Psoas muscle (tissue), 8 donors: ENCODE measurements at regions of chr5 and their contacts with region 1.

Region 1: DNA sequence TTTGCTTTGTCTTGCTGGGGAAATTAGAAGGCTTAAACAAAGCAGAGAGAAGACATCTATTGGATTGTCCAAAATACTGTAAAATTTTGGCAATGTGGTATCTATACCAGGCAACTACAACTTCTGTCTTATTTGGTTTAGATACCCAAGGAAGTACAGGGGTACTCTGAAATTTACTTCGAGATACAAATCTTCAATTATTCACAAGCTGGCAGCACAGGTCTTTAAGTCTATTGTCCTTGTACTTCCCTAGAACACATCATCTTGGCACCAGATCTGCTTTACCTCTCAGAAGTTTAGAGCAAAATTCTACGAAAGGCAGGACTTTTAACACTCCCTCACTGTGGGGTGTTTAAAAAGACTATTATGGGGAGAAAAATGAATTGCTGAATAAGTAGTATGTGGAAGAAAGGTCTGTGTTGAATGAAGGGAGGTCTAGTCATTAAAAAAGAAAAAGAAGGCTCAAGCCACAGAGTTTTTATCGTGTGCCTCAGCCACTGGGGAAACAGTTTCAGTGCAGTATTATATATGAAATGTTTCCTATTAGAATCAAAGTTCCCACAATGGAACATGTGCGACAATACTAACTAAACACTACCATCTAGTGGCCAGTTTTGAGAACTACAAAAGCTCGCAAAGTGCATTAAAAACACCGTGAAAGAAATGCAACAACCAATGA is 93.7 kb downstream of the PDE4D start:
- DNase-seq: no peak
- ATAC-seq: peak; percentile 66 to 90 (median 78)
- H3K4me3 ChIP-seq: no peak overlapping the region
- H3K27ac ChIP-seq: no peak overlapping the region
- H3K4me1 ChIP-seq: no peaks in the 10 kb centered on the region
- H3K27me3 ChIP-seq: no peaks in the 10 kb centered on the region
- CTCF ChIP-seq: peak; percentile 85

Region 2: DNA sequence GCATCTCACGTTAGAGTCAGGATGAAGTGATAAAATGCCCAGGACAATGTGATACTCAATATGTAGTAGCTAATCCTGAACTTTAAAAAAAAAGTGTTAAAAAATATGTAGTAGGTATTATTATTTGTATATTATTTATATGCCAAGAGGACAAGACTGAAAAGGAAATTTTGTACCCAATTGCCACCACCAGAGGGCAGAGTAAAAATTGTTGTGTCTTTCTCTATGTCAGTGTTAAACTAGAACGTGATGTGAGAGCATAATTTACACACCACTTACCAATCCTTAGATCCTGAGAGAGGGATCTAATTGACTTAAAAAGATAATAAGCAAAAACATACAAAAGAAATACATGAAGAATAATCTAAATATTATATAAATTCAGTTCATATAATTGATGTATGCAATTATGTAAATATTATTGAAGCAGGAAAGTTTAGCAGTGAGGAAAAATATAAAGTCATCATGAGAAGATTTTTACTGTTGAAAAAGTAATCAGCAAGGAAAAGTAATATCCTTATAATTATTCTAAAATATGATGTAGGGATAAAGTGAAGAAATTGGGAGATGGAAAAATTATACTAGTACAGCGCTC is 928.1 kb before region 1 on chr5:
- intact Hi-C with region 1: loop called (anchors 10 kb)
- DNase-seq: no peak
- ATAC-seq: peak in 2 of 4 donors; percentile 63 to 78
- H3K4me3 ChIP-seq: no peak overlapping the region
- H3K27ac ChIP-seq: no peak overlapping the region
- H3K4me1 ChIP-seq: no peaks in the 10 kb centered on the region
- H3K27me3 ChIP-seq: no peaks in the 10 kb centered on the region
- CTCF ChIP-seq: peak; percentile 60

Region 3: DNA sequence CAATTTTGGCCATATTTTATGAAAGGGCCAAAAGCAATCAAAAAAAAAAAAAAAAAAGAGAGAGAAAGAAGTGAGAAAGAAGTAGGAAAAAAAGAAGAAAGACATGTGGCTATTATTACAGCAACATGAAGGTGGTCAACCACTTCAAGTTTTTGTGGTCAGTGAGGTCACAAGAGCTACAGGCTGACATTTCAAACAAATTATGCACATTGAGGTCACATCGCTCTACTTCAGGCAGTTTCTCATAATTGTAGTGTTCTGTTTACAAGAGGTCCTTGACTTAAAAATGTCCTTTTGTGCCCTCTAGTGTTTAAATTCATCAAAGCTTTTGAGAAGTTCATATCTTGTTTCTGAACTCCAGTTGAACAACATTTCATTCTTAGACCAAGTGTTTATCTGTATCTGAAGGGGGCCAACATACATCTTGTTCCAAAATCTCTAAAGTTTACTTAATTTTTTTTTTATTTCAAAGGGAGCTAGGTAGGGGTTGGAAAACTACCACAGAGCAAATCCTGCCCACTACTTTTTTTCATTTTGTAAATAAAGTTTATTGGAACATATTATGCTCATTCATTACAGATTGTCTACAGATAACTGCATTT is 419.4 kb before region 1 on chr5:
- intact Hi-C with region 1: loop called in 1 of 2 experiments (anchors 10 kb)
- DNase-seq: no peak
- ATAC-seq: peak; percentile 42 to 67 (median 59)
- H3K4me3 ChIP-seq: no peak overlapping the region
- H3K27ac ChIP-seq: peak overlapping the region; percentile 13
- H3K4me1 ChIP-seq: no peaks in the 10 kb centered on the region
- H3K27me3 ChIP-seq: no peaks in the 10 kb centered on the region
- CTCF ChIP-seq: peak; percentile 50

Region 4: GRCh38 chr5:59390074-59390659 is 409.6 kb before region 1 on chr5:
- intact Hi-C with region 1: loop called (anchors 2 to 10 kb)
- DNase-seq: no peak
- ATAC-seq: no peak
- H3K4me3 ChIP-seq: no peak overlapping the region
- H3K27ac ChIP-seq: peak overlapping the region; percentile 38
- H3K4me1 ChIP-seq: peaks cover 6% of the 10 kb centered on the region
- H3K27me3 ChIP-seq: no peaks in the 10 kb centered on the region
- CTCF ChIP-seq: peak; percentile 76

Region 5: GRCh38 chr5:59506285-59506877 is 293.4 kb before region 1 on chr5:
- intact Hi-C with region 1: loop called in 1 of 2 experiments (anchors 10 kb)
- DNase-seq: no peak
- ATAC-seq: no peak
- H3K4me3 ChIP-seq: no peak overlapping the region
- H3K27ac ChIP-seq: no peak overlapping the region
- H3K4me1 ChIP-seq: peaks cover 41% of the 10 kb centered on the region
- H3K27me3 ChIP-seq: no peaks in the 10 kb centered on the region
- CTCF ChIP-seq: peak; percentile 66

Region 6: GRCh38 chr5:59724482-59725391 is 75.1 kb before region 1 on chr5:
- intact Hi-C with region 1: loop called in 1 of 2 experiments (anchors 5 kb)
- DNase-seq: no peak
- ATAC-seq: peak; percentile 68 to 83 (median 80)
- H3K4me3 ChIP-seq: no peak overlapping the region
- H3K27ac ChIP-seq: no peak overlapping the region
- H3K4me1 ChIP-seq: no peaks in the 10 kb centered on the region
- H3K27me3 ChIP-seq: no peaks in the 10 kb centered on the region
- CTCF ChIP-seq: peak; percentile 65